Heart left ventricle (tissue), 16 donors: ENCODE measurements at regions of chr5 and their contacts with region 1.

Region 1: DNA sequence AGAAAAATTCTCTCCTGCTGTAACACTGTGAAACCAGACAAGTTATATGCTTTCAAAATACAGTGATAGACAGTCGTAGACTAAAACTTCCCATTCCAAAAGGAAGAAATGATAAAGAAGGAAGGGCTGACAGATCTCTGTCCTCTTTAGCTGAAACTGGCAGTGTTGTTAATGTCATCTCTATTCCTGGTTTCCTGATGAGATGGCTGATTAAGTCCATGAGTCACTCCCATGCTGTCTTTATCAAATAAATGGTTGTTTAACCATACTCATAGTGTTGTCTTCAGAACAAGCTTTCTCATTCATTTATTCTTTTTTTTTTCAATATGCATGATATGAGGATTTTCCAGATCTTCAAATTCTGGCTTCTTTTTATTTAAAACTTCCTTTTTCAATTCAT is 952.2 kb upstream of the WWC1 start:
- DNase-seq: no peak
- ATAC-seq: no peak
- H3K4me3 ChIP-seq: no peak overlapping the region
- H3K27ac ChIP-seq: no peak overlapping the region
- H3K4me1 ChIP-seq: no peaks in the 10 kb centered on the region
- H3K27me3 ChIP-seq: no peaks in the 10 kb centered on the region
- CTCF ChIP-seq: no peak
- POLR2A ChIP-seq: no peak

Region 2: DNA sequence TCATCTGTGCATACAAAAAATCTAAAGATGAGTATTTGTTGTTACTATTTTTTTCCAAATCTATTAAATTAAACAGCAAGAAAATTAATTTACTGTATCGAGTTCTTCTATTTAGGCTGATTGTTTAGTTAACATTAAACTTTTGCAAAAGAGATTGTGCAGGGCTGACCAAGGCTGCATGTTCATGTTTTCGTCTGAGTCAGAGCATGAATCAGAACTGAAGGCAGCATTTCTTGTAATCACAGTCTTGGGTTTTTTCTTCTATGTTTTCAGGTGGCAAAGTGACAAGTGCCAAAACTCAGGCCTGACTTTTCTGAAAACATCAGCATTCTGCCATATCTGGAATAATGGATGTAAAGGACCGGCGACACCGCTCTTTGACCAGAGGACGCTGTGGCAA is 54.7 kb before region 1 on chr5:
- intact Hi-C with region 1: loop called in 1 of 10 experiments (anchors 5 kb)
- DNase-seq: no peak
- ATAC-seq: no peak
- H3K4me3 ChIP-seq: no peak overlapping the region
- H3K27ac ChIP-seq: no peak overlapping the region
- H3K4me1 ChIP-seq: no peaks in the 10 kb centered on the region
- H3K27me3 ChIP-seq: no peaks in the 10 kb centered on the region
- CTCF ChIP-seq: no peak
- POLR2A ChIP-seq: no peak

Region 3: DNA sequence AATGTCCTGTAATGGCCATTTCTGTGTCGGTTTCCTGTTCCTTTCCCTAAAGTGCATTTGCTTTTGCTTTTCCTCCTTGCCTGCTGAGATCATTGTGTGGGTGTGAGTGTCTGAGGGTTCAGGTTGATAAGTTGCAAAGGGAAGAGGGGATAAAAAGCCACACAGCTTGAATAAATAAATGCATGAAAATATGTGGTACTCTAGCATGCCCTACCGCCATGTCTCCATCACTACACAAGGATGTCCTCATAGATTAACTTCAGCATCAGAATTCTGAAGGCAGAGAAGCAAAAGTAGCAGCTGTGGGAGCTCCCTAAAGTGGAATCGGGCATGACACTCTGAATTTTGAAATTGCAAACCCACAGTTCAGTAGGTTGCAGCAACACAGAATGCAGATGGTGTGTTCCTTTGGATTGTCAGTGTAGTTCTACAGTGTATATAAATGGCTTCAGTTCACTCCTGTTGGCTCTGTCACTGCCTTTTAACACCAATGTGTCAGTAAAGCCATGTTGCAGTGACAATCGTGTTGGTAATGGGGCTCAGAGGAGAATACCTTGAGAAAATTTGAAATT is 21.4 kb before region 1 on chr5:
- intact Hi-C with region 1: no loop called
- DNase-seq: no peak
- ATAC-seq: no peak
- H3K4me3 ChIP-seq: no peak overlapping the region
- H3K27ac ChIP-seq: no peak overlapping the region
- H3K4me1 ChIP-seq: no peaks in the 10 kb centered on the region
- H3K27me3 ChIP-seq: no peaks in the 10 kb centered on the region
- CTCF ChIP-seq: no peak
- POLR2A ChIP-seq: no peak

Region 4: GRCh38 chr5:167425161-167425560 is 86.0 kb after region 1 on chr5:
- intact Hi-C with region 1: no loop called
- DNase-seq: no peak
- ATAC-seq: no peak
- H3K4me3 ChIP-seq: no peak overlapping the region
- H3K27ac ChIP-seq: no peak overlapping the region
- H3K4me1 ChIP-seq: no peaks in the 10 kb centered on the region
- H3K27me3 ChIP-seq: no peaks in the 10 kb centered on the region
- CTCF ChIP-seq: no peak
- POLR2A ChIP-seq: no peak

Region 5: GRCh38 chr5:167478188-167478587 is 139.0 kb after region 1 on chr5:
- intact Hi-C with region 1: no loop called
- DNase-seq: no peak
- ATAC-seq: no peak
- H3K4me3 ChIP-seq: no peak overlapping the region
- H3K27ac ChIP-seq: no peak overlapping the region
- H3K4me1 ChIP-seq: no peaks in the 10 kb centered on the region
- H3K27me3 ChIP-seq: no peaks in the 10 kb centered on the region
- CTCF ChIP-seq: no peak
- POLR2A ChIP-seq: no peak